Heart right ventricle (tissue), 16 donors: ENCODE measurements at regions of chr22 and their contacts with region 1.

Region 1: GRCh38 chr22:45863981-45864751 is 112.8 kb downstream of the WNT7B start:
- DNase-seq: peak; percentile 63 to 75
- ATAC-seq: peak in 7 of 8 donors; percentile 31 to 70 (median 61)
- H3K4me3 ChIP-seq: no peak overlapping the region
- H3K27ac ChIP-seq: no peak overlapping the region
- H3K4me1 ChIP-seq: peaks cover 9 to 28% (median 19%) of the 10 kb centered on the region in 9 donors
- H3K27me3 ChIP-seq: peaks cover 16 to 57% (median 38%) of the 10 kb centered on the region in 7 donors
- CTCF ChIP-seq: peak; percentile 81 to 97 (median 92)

Region 2: DNA sequence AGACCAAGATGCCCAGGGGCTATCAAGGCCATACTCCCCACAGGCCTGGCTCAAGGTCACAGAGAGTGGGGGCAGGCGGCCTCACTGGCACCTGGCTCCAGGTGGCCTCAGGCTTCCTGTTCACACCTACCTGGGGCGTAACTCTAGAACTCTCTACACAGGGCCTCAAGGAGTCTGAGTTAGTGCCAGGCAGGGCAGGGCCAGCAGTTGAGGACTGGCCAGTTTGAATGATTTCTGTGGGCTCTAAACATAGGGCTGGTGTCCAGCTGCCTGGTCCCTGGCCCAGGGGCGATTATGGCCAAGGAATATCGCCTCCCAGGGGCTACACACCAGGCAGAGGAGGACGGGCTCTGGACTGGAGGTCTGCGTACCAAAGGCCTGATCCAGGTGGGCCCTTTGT is 33.6 kb after region 1 on chr22:
- intact Hi-C with region 1: loop called in 1 of 10 experiments (anchors 2 kb)
- DNase-seq: peak in 1 of 2 donors; percentile 1
- ATAC-seq: no peak
- H3K4me3 ChIP-seq: no peak overlapping the region
- H3K27ac ChIP-seq: no peak overlapping the region
- H3K4me1 ChIP-seq: no peaks in the 10 kb centered on the region
- H3K27me3 ChIP-seq: peaks cover 0 to 31% (median 13%) of the 10 kb centered on the region in 7 donors
- CTCF ChIP-seq: no peak